Activated naive CD4-positive, alpha-beta T cell treated with anti-CD3 and anti-CD28 coated beads for 36 hours (primary cell): ENCODE measurements at regions of chr10 and their contacts with region 1.

Region 1: GRCh38 chr10:72048450-72049124 is 39.8 kb downstream of the SPOCK2 start:
- DNase-seq: peak; percentile 98
- H3K4me3 Mint-ChIP-seq: no peak overlapping the region
- H3K27ac Mint-ChIP-seq: no peak overlapping the region
- H3K4me1 Mint-ChIP-seq: peaks cover 3% of the 10 kb centered on the region
- H3K27me3 Mint-ChIP-seq: no peaks in the 10 kb centered on the region

Region 2: GRCh38 chr10:70693619-70694335 is 1354.8 kb before region 1 on chr10:
- CTCF ChIA-PET with region 1: no interaction called
- intact Hi-C with region 1: no loop called
- DNase-seq: no peak
- H3K4me3 Mint-ChIP-seq: no peak overlapping the region
- H3K27ac Mint-ChIP-seq: no peak overlapping the region
- H3K4me1 Mint-ChIP-seq: no peaks in the 10 kb centered on the region
- H3K27me3 Mint-ChIP-seq: no peaks in the 10 kb centered on the region

Region 3: DNA sequence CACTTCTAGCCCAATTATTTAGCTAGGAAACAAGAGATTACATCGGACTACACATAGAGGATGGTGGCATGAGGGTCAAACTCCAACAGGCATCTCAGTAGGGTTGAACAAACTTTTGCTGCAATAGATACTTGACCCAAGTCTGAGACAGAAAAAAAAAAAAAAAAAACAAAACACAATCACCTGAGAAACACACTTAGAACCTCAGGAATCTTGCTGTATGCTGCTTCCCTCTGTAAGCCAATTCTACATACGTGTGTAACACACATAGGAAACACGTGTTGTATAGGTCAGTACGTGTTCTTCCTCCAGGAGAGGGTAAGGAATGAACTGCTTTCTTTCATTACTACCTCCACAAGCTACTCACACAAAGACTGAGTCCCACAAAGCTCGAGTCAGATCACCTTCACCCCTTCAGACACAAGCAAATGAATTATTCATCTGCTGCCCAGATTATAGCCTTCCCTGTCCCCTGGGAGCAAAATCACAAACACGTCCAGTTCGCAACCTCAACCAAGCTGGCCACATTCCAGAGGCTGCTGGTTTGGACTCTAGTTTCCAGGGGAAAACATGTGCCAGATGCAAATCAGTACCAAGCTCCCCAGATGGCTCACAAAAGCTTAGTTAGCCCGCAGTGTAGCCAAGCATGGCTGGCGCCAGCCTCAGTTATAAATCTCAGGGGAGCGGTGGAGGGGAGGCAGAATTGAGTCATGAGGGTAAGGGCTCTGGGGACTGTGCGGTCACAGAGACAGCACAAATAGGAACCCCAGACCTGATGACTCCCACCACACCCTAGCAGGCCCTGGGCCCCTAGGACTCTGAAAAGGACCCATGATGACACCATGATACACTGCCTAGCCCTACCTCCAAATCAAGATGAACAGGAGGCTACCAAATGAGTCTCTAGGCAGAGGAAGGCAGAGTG is 212.7 kb before region 1 on chr10:
- CTCF ChIA-PET with region 1: interaction called, 14 read pairs
- intact Hi-C with region 1: loop called (anchors 1 kb)
- DNase-seq: no peak
- H3K4me3 Mint-ChIP-seq: no peak overlapping the region
- H3K27ac Mint-ChIP-seq: no peak overlapping the region
- H3K4me1 Mint-ChIP-seq: peaks cover 47% of the 10 kb centered on the region
- H3K27me3 Mint-ChIP-seq: no peaks in the 10 kb centered on the region

Region 4: GRCh38 chr10:71957546-71958275 is 90.9 kb before region 1 on chr10:
- CTCF ChIA-PET with region 1: interaction called, 94 read pairs
- intact Hi-C with region 1: loop called (anchors 1 kb)
- DNase-seq: no peak
- H3K4me3 Mint-ChIP-seq: no peak overlapping the region
- H3K27ac Mint-ChIP-seq: no peak overlapping the region
- H3K4me1 Mint-ChIP-seq: no peaks in the 10 kb centered on the region
- H3K27me3 Mint-ChIP-seq: peaks cover 9% of the 10 kb centered on the region

Region 5: DNA sequence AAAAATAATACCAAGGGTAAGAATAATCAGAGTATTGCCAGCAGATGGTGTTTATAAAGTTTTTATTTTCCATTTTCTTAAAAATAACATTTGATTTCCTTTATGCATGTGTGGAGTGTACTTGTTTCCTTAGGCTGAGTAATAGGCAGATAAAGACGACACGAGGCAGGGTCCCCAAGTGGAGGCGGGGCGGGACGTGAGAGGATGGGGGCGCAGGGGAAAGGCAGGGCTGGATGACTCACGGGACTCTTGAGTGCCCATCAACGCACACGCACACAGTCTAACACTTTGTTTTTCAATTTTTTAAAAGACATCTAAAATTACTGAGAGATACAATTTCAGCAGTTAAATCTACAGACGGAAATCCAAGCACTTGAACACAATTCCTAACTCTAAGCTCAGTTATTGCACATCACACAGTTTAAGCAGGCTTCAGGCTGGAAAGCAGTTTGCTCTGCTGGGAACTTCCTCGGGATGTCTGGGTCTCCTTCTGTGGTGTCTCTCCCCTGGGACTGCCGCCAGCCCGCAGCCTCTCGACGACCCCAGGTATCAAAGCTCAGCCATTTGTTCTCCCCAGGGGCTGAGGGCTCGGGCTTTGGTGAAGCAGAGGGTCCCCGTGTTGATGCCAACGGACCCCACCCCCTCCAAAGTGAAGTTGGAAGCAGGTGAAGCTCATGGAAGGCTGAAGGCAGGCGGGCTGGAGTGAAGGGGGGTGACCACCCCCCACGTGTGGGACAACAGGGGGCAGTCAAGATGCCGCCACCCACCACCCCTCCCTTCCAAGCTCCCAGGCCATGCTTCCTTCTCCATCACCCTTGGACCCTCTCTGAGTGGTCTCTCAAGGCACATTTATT is 10.6 kb after region 1 on chr10:
- CTCF ChIA-PET with region 1: interaction called, 18 read pairs
- intact Hi-C with region 1: no loop called
- DNase-seq: peak; percentile 38
- H3K4me3 Mint-ChIP-seq: no peak overlapping the region
- H3K27ac Mint-ChIP-seq: no peak overlapping the region
- H3K4me1 Mint-ChIP-seq: peaks cover 34% of the 10 kb centered on the region
- H3K27me3 Mint-ChIP-seq: no peaks in the 10 kb centered on the region

Region 6: GRCh38 chr10:72126184-72126871 is 77.7 kb after region 1 on chr10:
- CTCF ChIA-PET with region 1: interaction called, 9 read pairs
- intact Hi-C with region 1: loop called (anchors 1 kb)
- DNase-seq: no peak
- H3K4me3 Mint-ChIP-seq: no peak overlapping the region
- H3K27ac Mint-ChIP-seq: peak overlapping the region; percentile 16
- H3K4me1 Mint-ChIP-seq: peaks cover 46% of the 10 kb centered on the region
- H3K27me3 Mint-ChIP-seq: no peaks in the 10 kb centered on the region

Region 7: DNA sequence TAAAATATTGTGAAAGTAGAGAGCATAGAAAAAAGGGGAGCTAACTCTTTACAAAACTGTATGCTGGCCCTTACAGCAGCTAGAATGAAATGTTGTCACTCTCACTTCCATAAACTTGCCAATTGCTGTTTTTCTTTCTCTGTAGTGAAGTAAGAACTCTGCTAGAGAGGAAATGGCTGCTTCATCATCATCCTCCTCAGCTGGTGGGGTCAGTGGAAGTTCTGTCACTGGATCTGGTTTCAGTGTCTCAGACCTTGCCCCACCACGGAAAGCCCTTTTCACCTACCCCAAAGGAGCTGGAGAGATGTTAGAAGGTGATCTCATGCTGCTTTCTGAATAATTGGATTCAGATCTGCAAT is 175.1 kb after region 1 on chr10:
- CTCF ChIA-PET with region 1: interaction called, 30 read pairs
- intact Hi-C with region 1: loop called (anchors 1 kb)
- DNase-seq: peak; percentile 44
- H3K4me3 Mint-ChIP-seq: no peak overlapping the region
- H3K27ac Mint-ChIP-seq: peak overlapping the region; percentile 89
- H3K4me1 Mint-ChIP-seq: peaks cover 63% of the 10 kb centered on the region
- H3K27me3 Mint-ChIP-seq: no peaks in the 10 kb centered on the region

Region 8: DNA sequence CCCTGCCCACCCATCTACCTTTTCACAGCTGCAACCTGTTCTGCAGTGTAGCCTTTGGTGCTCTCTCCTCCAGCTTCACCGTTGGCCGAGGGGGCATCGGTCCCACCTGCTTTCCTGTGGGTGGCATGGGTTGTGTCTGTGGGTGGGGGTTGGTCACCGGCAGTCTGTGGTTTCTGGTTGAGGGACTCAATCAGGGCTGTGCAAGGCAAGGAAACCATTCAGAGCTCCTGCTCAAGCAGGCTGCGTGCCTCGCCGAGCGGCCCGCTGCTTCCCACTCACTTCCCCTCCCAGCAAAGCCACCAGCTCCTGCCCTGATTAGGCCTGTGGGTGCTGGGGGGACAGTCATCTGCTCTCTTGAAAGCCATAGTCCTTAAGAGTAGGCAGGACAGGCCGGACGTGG is 296.3 kb after region 1 on chr10:
- CTCF ChIA-PET with region 1: interaction called, 83 read pairs
- intact Hi-C with region 1: loop called (anchors 1 kb)
- DNase-seq: no peak
- H3K4me3 Mint-ChIP-seq: no peak overlapping the region
- H3K27ac Mint-ChIP-seq: no peak overlapping the region
- H3K4me1 Mint-ChIP-seq: peaks cover 14% of the 10 kb centered on the region
- H3K27me3 Mint-ChIP-seq: no peaks in the 10 kb centered on the region